ENCODE measurements at regions of chr9 and their contacts with region 1.

Region 1: GRCh38 chr9:113578882-113579282 is 115.4 kb downstream of the RGS3 start:
- DNase-seq: no peak
- ATAC-seq: peak in 3 of 8 donors; percentile 3 to 20 (median 14)
- H3K4me3 ChIP-seq: peak overlapping the region in 1 of 10 donors; percentile 44
- H3K27ac ChIP-seq: peak overlapping the region; percentile 16 to 93 (median 88)
- H3K4me1 ChIP-seq: peaks cover 58 to 100% (median 85%) of the 10 kb centered on the region in 9 donors
- H3K27me3 ChIP-seq: no peaks in the 10 kb centered on the region
- CTCF ChIP-seq: no peak

Region 2: GRCh38 chr9:113275157-113276131 is 303.4 kb before region 1 on chr9 and contains the starts of genes CDC26 and PRPF4:
- intact Hi-C with region 1: loop called in 4 of 10 experiments (anchors 10 kb)
- DNase-seq: peak; percentile 96 to 98
- ATAC-seq: peak; percentile 98 to 99 (median 98)
- H3K4me3 ChIP-seq: peak within 1 kb of the TSS; percentile 36 to 89 (median 78)
- H3K27ac ChIP-seq: peak within 1 kb of the TSS; percentile 63 to 95 (median 90)
- H3K4me1 ChIP-seq: peaks cover 5 to 50% (median 23%) of the 10 kb centered on the region in 9 donors
- H3K27me3 ChIP-seq: no peaks in the 10 kb centered on the region
- CTCF ChIP-seq: no peak
- total RNA-seq, gene CDC26: 26.7 to 39.7 (median 30.8) TPM
- total RNA-seq, gene PRPF4: 10.7 to 17.2 (median 13.3) TPM

Region 3: DNA sequence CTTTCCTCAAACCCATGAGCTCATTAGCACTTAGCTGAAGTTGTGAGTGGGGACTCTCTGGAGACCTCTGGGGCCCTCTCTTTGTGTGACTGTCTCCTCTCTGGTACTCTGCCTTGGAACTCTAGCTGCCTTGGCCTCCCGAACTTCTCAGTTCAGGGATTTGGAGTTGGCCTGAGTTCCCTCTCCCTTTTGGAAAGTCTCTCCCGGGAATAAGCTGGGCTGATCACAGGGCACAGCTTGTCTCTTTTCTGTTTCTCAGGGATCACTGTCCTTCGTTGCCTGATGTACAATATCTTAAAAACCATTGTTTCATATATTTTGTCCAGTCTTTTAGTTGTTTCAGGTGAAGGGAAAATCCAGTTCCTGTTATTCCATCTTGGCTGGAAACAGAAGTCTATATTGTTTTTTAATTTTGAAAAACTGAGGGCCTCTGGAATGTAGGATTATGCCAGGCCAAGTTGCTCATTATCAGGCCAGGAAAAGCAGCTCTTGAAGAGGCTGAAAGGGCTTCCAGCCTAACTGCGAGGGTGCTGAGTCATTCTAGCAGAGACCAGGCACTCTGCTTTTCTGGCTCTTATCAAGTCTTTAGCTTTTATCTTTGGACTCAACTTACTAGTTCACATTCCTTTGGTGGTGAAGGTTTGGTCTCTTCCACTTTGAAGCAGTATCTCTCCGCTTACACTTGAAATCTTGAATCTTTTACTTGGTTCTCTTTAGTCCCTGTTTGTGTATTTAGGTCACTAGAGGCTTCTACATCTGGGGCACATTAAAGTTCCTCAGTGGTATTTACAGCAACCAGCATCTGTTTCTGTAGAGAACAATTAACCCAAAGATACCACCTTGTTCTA is 123.7 kb before region 1 on chr9:
- intact Hi-C with region 1: loop called in 3 of 10 experiments (anchors 2 to 5 kb)
- DNase-seq: peak in 1 of 2 donors; percentile 68
- ATAC-seq: peak; percentile 89 to 97 (median 96)
- H3K4me3 ChIP-seq: no peak overlapping the region
- H3K27ac ChIP-seq: peak overlapping the region; percentile 71 to 98 (median 90)
- H3K4me1 ChIP-seq: peaks cover 21 to 47% (median 32%) of the 10 kb centered on the region in 9 donors
- H3K27me3 ChIP-seq: no peaks in the 10 kb centered on the region
- CTCF ChIP-seq: no peak

Region 4: GRCh38 chr9:113493213-113493540 is 85.7 kb before region 1 on chr9:
- intact Hi-C with region 1: no loop called
- DNase-seq: no peak
- ATAC-seq: peak in 1 of 8 donors; percentile 4
- H3K4me3 ChIP-seq: no peak overlapping the region
- H3K27ac ChIP-seq: peak overlapping the region in 7 of 10 donors; percentile 48 to 83 (median 78)
- H3K4me1 ChIP-seq: peaks cover 0 to 46% (median 28%) of the 10 kb centered on the region in 9 donors
- H3K27me3 ChIP-seq: no peaks in the 10 kb centered on the region
- CTCF ChIP-seq: no peak

Region 5: GRCh38 chr9:113511856-113512761 is 66.8 kb before region 1 on chr9:
- intact Hi-C with region 1: loop called in 2 of 10 experiments (anchors 5 to 10 kb)
- DNase-seq: no peak
- ATAC-seq: no peak
- H3K4me3 ChIP-seq: no peak overlapping the region
- H3K27ac ChIP-seq: peak overlapping the region in 8 of 10 donors; percentile 24 to 96 (median 74)
- H3K4me1 ChIP-seq: peaks cover 11 to 66% (median 45%) of the 10 kb centered on the region in 9 donors
- H3K27me3 ChIP-seq: no peaks in the 10 kb centered on the region
- CTCF ChIP-seq: no peak

Region 6: GRCh38 chr9:113541019-113541900 is 37.6 kb before region 1 on chr9:
- intact Hi-C with region 1: loop called in 2 of 10 experiments (anchors 5 kb)
- DNase-seq: peak in 1 of 2 donors; percentile 48
- ATAC-seq: peak in 7 of 8 donors; percentile 2 to 48 (median 36)
- H3K4me3 ChIP-seq: no peak overlapping the region
- H3K27ac ChIP-seq: peak overlapping the region in 7 of 10 donors; percentile 2 to 91 (median 67)
- H3K4me1 ChIP-seq: peaks cover 33 to 97% (median 68%) of the 10 kb centered on the region in 9 donors
- H3K27me3 ChIP-seq: no peaks in the 10 kb centered on the region
- CTCF ChIP-seq: no peak

Region 7: DNA sequence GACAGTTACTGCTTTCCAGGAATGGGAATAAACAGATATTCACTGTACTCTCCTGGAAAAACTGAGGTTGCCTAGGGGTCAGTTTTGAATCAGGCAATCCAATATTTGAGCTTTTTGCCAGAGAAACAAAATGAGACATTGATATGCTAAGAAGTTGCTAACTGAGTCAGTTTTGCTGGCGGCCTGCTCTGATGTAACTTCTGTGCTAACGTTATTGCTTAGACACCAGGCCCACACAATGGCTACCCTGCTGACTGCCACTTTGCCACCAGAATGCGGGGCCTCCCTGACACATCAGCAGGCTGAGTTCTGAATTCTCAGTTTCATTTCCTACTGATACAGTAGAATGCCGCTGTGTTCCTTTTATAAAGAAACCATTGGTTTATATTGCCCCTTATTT is 279.0 kb after region 1 on chr9:
- intact Hi-C with region 1: no loop called
- DNase-seq: no peak
- ATAC-seq: peak in 3 of 8 donors; percentile 35 to 52 (median 42)
- H3K4me3 ChIP-seq: no peak overlapping the region
- H3K27ac ChIP-seq: peak overlapping the region in 1 of 10 donors; percentile 20
- H3K4me1 ChIP-seq: no peaks in the 10 kb centered on the region
- H3K27me3 ChIP-seq: peaks cover 0 to 24% (median 0%) of the 10 kb centered on the region in 7 donors
- CTCF ChIP-seq: no peak

Measured in heart right ventricle (tissue), 16 donors.